Brain microvascular endothelial cell (primary cell): ENCODE measurements at regions of chr17 and their contacts with region 1.

Region 1: GRCh38 chr17:50681263-50682210 is 26.2 kb downstream of the ANKRD40 start:
- DNase-seq: peak; percentile 74
- H3K4me3 ChIP-seq: no peak overlapping the region
- H3K27ac ChIP-seq: no peak overlapping the region
- H3K27me3 ChIP-seq: no peaks in the 10 kb centered on the region
- CTCF ChIP-seq: peak; percentile 85

Region 2: GRCh38 chr17:50560185-50560824 is 121.2 kb before region 1 on chr17 and contains the start of gene CACNA1G:
- in situ Hi-C with region 1: loop called (anchors 25 kb)
- DNase-seq: peak; percentile 75
- H3K4me3 ChIP-seq: peak within 1 kb of the TSS; percentile 39
- H3K27ac ChIP-seq: no peak within 1 kb of the TSS
- H3K27me3 ChIP-seq: peaks cover 62% of the 10 kb centered on the region
- CTCF ChIP-seq: no peak